ENCODE measurements at regions of chr20 and their contacts with region 1.

Region 1: GRCh38 chr20:46349035-46349741 is 40.9 kb upstream of the CDH22 start:
- DNase-seq: peak; percentile 47
- H3K4me3 Mint-ChIP-seq: no peak overlapping the region
- H3K27ac Mint-ChIP-seq: no peak overlapping the region
- H3K4me1 Mint-ChIP-seq: peaks cover 11% of the 10 kb centered on the region
- H3K27me3 Mint-ChIP-seq: no peaks in the 10 kb centered on the region
- CTCF ChIP-seq: peak; percentile 60

Region 2: DNA sequence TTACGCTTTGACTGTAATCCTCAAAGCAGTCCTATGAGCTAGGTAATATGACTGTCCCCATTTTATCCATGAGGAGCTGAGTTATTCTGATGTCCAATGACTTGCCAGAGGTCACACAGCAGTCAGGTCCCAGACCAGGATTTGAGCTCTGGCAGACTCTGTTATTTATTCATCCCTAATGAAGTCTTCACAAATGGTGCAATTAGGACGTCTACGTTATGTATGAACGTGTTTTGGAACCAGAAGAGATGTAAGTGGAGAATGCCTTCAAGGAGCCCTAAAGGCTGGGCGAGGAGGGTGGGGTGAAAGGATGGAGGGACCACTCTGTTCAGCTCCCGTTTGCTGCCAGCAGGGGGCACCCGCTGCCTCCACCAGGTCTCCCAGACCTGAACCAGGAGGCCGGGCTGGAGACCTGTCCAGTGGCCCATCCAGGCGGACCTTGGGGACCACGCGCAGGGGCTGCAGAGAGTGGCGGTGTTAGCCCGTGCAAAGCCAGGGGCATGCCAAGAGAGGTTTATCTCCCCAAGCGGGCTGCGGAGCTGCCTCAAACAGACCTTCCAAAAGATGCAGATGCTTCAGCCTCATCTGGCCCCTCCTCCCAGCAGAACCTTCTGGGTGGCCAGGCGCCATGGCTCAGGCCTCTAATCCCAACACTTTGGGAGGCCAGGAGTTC is 361.9 kb before region 1 on chr20:
- CTCF ChIA-PET with region 1: interaction called, 15 read pairs
- POLR2A ChIA-PET with region 1: interaction called, 3 read pairs
- intact Hi-C with region 1: no loop called
- DNase-seq: peak; percentile 73
- H3K4me3 Mint-ChIP-seq: no peak overlapping the region
- H3K27ac Mint-ChIP-seq: no peak overlapping the region
- H3K4me1 Mint-ChIP-seq: no peaks in the 10 kb centered on the region
- H3K27me3 Mint-ChIP-seq: no peaks in the 10 kb centered on the region
- CTCF ChIP-seq: peak; percentile 88

Region 3: DNA sequence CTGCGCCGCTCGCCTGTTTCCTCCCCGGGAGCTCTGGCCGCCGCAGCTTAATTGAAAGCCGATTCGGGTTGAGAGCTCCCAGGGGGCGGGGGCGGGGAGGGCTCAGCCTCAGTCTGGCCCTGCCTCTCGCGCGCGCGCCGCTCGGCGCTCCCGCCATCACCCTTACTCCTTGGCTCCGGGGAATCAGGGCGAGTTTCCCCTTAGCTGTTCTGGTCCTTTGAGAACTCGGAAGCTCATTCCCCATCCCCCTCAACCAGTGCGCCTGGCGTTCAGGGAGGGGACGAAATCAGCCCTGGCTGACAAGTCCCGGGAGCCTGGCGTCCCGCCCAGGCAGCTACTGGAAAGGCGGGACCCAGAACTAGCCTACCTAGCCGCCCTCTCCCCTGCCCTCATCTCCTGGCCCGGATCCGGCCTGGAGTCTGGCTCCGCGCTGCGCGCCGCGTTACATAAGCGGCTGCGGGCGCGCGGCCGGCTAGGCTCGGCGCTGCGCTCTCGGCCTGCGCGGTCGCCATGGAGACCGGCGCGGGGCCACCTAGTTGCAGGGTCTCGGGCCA is 317.4 kb before region 1 on chr20:
- CTCF ChIA-PET with region 1: no interaction called
- POLR2A ChIA-PET with region 1: no interaction called
- intact Hi-C with region 1: no loop called
- DNase-seq: no peak
- H3K4me3 Mint-ChIP-seq: no peak overlapping the region
- H3K27ac Mint-ChIP-seq: no peak overlapping the region
- H3K4me1 Mint-ChIP-seq: peaks cover 6% of the 10 kb centered on the region
- H3K27me3 Mint-ChIP-seq: peaks cover 61% of the 10 kb centered on the region
- CTCF ChIP-seq: no peak

Region 4: DNA sequence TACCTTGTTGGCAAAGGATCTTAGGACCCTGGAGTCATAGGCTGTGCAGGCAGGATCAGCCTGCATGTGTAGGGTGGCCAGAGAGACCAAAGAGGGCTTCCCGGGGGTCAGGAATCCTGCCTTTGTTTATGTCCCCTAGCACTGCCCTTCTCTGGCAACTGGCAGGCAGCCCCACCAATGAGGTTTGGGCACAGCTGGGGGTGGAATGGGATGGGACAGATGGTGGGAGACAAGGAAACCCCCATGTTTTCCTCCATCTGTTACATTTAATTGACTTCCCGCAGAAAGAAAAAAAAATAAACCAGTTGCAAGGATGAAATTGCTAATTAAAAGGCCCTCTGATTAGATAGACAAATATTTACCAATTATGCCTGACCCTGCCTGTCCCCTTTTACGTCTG is 203.5 kb before region 1 on chr20:
- CTCF ChIA-PET with region 1: interaction called, 19 read pairs
- POLR2A ChIA-PET with region 1: no interaction called
- intact Hi-C with region 1: no loop called
- DNase-seq: no peak
- H3K4me3 Mint-ChIP-seq: no peak overlapping the region
- H3K27ac Mint-ChIP-seq: no peak overlapping the region
- H3K4me1 Mint-ChIP-seq: peaks cover 7% of the 10 kb centered on the region
- H3K27me3 Mint-ChIP-seq: peaks cover 23% of the 10 kb centered on the region
- CTCF ChIP-seq: no peak

Region 5: GRCh38 chr20:46305331-46305972 is 43.7 kb before region 1 on chr20:
- CTCF ChIA-PET with region 1: interaction called, 21 read pairs
- POLR2A ChIA-PET with region 1: interaction called, 4 read pairs
- intact Hi-C with region 1: no loop called
- DNase-seq: no peak
- H3K4me3 Mint-ChIP-seq: no peak overlapping the region
- H3K27ac Mint-ChIP-seq: no peak overlapping the region
- H3K4me1 Mint-ChIP-seq: no peaks in the 10 kb centered on the region
- H3K27me3 Mint-ChIP-seq: peaks cover 59% of the 10 kb centered on the region
- CTCF ChIP-seq: no peak

Region 6: GRCh38 chr20:46330072-46330763 is 19.0 kb before region 1 on chr20:
- CTCF ChIA-PET with region 1: interaction called, 26 read pairs
- POLR2A ChIA-PET with region 1: interaction called, 5 read pairs
- intact Hi-C with region 1: no loop called
- DNase-seq: no peak
- H3K4me3 Mint-ChIP-seq: no peak overlapping the region
- H3K27ac Mint-ChIP-seq: no peak overlapping the region
- H3K4me1 Mint-ChIP-seq: peaks cover 17% of the 10 kb centered on the region
- H3K27me3 Mint-ChIP-seq: peaks cover 16% of the 10 kb centered on the region
- CTCF ChIP-seq: no peak

Region 7: DNA sequence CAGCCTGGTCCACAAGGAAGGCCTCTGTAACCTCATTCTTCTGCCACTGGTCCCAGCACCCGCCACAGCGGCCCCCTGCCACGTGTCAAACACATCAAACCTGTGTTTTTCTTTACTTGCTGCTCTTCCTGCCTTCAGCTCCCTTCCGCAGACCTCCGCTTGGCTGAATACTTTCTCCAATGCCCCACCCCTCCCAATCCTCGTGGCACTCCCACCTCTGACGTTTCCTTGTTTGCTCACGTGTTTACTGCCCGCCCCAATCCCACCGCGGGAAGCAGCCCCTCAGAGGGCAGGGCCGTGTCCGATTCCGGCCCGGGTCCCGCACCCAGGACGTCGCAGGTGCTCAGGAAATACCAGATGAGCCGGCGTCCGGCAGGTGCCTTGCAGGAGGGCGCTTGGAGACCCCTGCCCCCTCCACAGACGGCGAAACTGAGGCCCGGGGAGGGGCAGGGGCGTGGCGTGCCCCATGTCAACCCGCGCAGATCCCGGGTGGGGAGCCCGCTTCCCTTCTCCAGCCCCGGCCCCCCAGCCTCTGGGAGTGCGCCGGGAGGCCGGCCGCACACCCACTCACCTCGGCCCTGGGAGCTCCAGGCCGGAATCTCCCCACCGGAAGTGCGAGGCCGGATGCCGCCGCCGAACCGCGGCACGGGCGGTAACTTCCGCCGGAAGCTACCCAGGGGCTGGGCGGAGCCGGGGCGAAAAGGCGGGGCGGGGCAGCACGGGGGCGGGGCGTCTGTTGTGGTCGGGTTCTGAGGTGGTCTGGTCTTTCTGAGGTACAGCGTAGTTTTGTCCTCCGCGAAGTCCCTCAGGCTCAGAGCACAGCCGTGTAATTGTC is 14.8 kb after region 1 on chr20:
- CTCF ChIA-PET with region 1: interaction called, 43 read pairs
- POLR2A ChIA-PET with region 1: interaction called, 11 read pairs
- intact Hi-C with region 1: no loop called
- DNase-seq: peak; percentile 83
- H3K4me3 Mint-ChIP-seq: peak overlapping the region; percentile 91
- H3K27ac Mint-ChIP-seq: peak overlapping the region; percentile 92
- H3K4me1 Mint-ChIP-seq: peaks cover 29% of the 10 kb centered on the region
- H3K27me3 Mint-ChIP-seq: no peaks in the 10 kb centered on the region
- CTCF ChIP-seq: no peak

Region 8: DNA sequence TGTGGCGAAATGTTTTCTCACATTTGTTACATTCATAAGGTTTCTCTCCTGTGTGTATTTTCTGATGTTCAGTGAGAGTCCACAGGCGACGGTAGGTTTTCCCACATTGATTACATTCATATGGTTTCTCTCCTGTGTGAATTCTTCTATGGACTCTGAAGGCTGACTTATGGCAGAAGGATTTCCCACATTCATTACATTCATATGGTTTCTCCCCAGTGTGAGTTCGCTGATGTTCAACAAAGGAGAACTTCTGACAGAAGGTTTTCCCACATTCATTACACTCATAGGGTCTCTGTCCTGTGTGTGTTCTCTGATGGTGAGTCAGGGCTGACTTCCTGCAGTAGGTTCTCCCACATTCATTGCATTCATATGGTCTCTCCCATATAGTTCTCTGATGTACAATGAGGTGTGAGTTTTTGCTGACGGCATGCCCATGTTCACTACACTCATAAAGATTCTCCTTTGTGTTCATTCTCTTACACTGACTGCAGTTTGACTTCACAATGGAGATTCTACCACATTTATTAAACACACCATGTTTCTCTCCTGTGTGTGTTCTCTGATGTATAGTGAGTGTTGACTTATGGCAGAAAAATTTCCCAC is 152.3 kb after region 1 on chr20:
- CTCF ChIA-PET with region 1: no interaction called
- POLR2A ChIA-PET with region 1: no interaction called
- intact Hi-C with region 1: no loop called
- DNase-seq: no peak
- H3K4me3 Mint-ChIP-seq: no peak overlapping the region
- H3K27ac Mint-ChIP-seq: no peak overlapping the region
- H3K4me1 Mint-ChIP-seq: no peaks in the 10 kb centered on the region
- H3K27me3 Mint-ChIP-seq: peaks cover 57% of the 10 kb centered on the region
- CTCF ChIP-seq: no peak

Region 9: DNA sequence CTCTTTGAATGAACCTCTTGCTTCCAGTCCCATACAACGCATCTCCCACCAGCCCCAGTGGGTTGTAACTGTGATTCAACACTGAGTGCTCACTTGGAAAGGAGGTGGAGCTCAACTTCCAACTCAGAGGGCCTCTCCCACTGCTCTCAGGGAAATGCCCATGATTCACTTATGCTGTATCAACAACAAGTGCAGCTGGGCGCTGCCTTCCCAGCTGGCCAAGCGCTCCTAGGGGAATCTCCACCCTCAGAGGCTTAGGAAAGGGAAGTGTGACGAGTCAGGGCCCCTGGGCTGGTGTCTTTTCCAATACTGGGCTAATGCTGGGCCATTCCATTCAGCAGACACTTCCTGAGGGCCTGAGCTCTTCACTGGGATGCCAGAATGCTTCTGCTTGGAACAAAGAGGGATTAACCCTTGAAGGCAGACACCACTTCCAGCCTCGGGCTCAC is 209.3 kb after region 1 on chr20:
- CTCF ChIA-PET with region 1: no interaction called
- POLR2A ChIA-PET with region 1: no interaction called
- intact Hi-C with region 1: no loop called
- DNase-seq: peak; percentile 80
- H3K4me3 Mint-ChIP-seq: no peak overlapping the region
- H3K27ac Mint-ChIP-seq: no peak overlapping the region
- H3K4me1 Mint-ChIP-seq: peaks cover 18% of the 10 kb centered on the region
- H3K27me3 Mint-ChIP-seq: no peaks in the 10 kb centered on the region
- CTCF ChIP-seq: no peak